Heart left ventricle (tissue), 16 donors: ENCODE measurements at regions of chr3 and their contacts with region 1.

Region 1: GRCh38 chr3:50961386-50961785 is 286.7 kb downstream of the DOCK3 start:
- DNase-seq: no peak
- ATAC-seq: no peak
- H3K4me3 ChIP-seq: no peak overlapping the region
- H3K27ac ChIP-seq: no peak overlapping the region
- H3K4me1 ChIP-seq: no peaks in the 10 kb centered on the region
- H3K27me3 ChIP-seq: peaks cover 0 to 4% (median 0%) of the 10 kb centered on the region in 9 donors
- CTCF ChIP-seq: no peak
- POLR2A ChIP-seq: no peak

Region 2: GRCh38 chr3:51269466-51269865 is 308.1 kb after region 1 on chr3:
- intact Hi-C with region 1: no loop called
- DNase-seq: no peak
- ATAC-seq: no peak
- H3K4me3 ChIP-seq: no peak overlapping the region
- H3K27ac ChIP-seq: no peak overlapping the region
- H3K4me1 ChIP-seq: no peaks in the 10 kb centered on the region
- H3K27me3 ChIP-seq: no peaks in the 10 kb centered on the region
- CTCF ChIP-seq: no peak
- POLR2A ChIP-seq: no peak

Region 3: GRCh38 chr3:51362476-51362875 is 401.1 kb after region 1 on chr3:
- intact Hi-C with region 1: loop called in 1 of 10 experiments (anchors 10 kb)
- DNase-seq: no peak
- ATAC-seq: no peak
- H3K4me3 ChIP-seq: no peak overlapping the region
- H3K27ac ChIP-seq: no peak overlapping the region
- H3K4me1 ChIP-seq: no peaks in the 10 kb centered on the region
- H3K27me3 ChIP-seq: no peaks in the 10 kb centered on the region
- CTCF ChIP-seq: no peak
- POLR2A ChIP-seq: no peak